Dendritic cell treated with granulocyte-macrophage colony-stimulating factor and Interleukin-4, amounts not matched to agents 40 ng/mL and 50 ng/mL, for 4 days (primary cell): ENCODE measurements at regions of chr4 and their contacts with region 1.

Region 1: DNA sequence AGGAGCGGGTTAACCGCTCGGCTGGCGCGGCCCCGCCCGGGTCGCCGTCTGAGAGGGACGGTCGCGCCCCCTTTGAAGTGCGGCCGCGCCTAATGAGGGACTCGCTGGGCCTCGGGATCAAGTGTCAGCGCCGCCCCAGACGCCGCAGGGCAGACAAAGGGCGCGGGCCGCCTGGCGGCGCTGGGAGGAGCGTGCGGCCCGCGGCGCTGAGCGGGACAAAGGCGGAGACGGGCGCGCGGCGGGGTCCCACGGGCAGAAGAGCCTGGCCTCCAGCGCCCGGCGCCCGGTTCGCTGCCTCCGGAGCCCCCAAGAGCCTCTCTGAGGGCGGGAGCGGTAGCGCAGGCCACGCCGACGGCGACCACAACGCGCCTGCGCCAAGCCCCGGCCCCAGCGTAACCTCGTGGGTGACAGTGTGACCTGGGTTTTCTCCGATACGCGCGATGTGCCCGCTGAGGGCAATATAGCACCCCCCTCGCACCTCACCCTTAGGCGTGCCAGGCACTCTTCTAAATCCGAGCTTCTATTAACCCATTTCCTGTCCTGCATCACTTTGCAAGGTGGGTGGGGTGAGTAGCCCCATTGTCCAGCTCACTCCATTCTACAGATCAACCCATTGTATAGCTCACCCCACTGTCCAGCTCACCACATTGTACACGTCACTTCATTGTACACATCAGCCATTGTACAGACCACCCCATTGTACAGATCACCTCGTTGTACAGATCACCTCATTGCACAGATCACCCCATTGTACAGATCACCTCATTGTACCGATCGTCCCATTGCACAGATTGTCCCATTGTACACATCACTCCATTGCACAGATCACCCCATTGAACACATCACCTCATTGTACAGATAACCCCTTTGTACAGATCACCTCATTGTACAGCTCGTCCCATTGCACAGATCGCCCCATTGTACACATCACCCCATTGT is 33.7 kb upstream of the STX18 start:
- H3K4me3 Mint-ChIP-seq: peak overlapping the region; percentile 84
- H3K27ac Mint-ChIP-seq: peak overlapping the region; percentile 78
- H3K4me1 Mint-ChIP-seq: peaks cover 25% of the 10 kb centered on the region
- H3K27me3 Mint-ChIP-seq: peaks cover 31% of the 10 kb centered on the region

Region 2: DNA sequence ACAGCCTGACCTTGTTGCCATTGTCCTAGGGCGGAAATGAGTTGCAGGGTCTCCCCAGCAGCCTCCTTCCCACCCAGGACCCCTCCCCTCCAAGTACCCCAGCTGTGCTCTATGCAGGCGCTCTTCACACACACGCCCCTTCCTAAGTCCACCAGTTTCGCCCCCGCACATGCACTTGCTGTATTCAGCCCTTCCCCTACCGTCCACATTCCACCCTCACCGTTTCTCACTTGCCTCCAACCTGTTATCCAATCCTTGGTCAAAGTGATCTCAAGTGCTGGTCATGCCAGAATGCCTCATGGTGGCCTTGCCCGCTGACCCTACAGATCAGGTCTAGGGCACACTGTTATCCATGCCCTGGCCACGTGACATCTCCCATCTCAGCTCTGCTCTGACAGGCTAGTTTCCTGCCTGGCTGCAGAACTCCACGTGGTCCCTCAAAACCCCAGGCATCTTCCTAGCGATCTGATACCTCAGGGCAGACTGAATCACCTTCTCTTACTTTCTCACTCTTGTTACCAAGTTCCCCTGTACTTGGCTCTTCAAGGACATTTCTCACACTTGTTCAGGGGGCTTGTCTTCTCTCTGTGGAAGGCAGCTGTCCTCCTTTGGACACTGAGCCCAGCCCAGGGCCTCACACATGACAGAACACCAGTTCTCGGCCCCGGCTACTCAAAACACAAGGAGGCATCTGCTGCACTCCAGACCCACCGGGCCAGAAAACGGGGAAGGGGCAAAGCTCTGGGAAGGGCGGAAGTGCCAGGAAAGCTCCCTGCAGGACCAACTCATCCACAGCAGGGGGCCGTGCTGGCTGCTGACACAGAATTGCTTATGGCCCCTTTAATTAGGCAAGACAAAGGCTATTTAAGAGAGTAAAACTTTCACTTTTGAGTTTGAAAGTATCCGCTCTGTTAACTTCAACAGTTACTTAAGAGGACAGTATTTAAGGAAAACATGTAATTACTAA is 148.7 kb before region 1 on chr4:
- intact Hi-C with region 1: no loop called
- H3K4me3 Mint-ChIP-seq: no peak overlapping the region
- H3K27ac Mint-ChIP-seq: no peak overlapping the region
- H3K4me1 Mint-ChIP-seq: no peaks in the 10 kb centered on the region
- H3K27me3 Mint-ChIP-seq: no peaks in the 10 kb centered on the region

Region 3: GRCh38 chr4:4488405-4489404 is 86.8 kb before region 1 on chr4:
- intact Hi-C with region 1: loop called (anchors 5 kb)
- H3K4me3 Mint-ChIP-seq: no peak overlapping the region
- H3K27ac Mint-ChIP-seq: no peak overlapping the region
- H3K4me1 Mint-ChIP-seq: peaks cover 5% of the 10 kb centered on the region
- H3K27me3 Mint-ChIP-seq: no peaks in the 10 kb centered on the region

Region 4: GRCh38 chr4:4541661-4542570 is 33.6 kb before region 1 on chr4 and contains the start of gene STX18:
- intact Hi-C with region 1: loop called (anchors 1 kb)
- H3K4me3 Mint-ChIP-seq: peak within 1 kb of the TSS; percentile 80
- H3K27ac Mint-ChIP-seq: peak within 1 kb of the TSS; percentile 89
- H3K4me1 Mint-ChIP-seq: peaks cover 38% of the 10 kb centered on the region
- H3K27me3 Mint-ChIP-seq: peaks cover 2% of the 10 kb centered on the region